ENCODE measurements at regions of chr4 and their contacts with region 1.

Region 1: DNA sequence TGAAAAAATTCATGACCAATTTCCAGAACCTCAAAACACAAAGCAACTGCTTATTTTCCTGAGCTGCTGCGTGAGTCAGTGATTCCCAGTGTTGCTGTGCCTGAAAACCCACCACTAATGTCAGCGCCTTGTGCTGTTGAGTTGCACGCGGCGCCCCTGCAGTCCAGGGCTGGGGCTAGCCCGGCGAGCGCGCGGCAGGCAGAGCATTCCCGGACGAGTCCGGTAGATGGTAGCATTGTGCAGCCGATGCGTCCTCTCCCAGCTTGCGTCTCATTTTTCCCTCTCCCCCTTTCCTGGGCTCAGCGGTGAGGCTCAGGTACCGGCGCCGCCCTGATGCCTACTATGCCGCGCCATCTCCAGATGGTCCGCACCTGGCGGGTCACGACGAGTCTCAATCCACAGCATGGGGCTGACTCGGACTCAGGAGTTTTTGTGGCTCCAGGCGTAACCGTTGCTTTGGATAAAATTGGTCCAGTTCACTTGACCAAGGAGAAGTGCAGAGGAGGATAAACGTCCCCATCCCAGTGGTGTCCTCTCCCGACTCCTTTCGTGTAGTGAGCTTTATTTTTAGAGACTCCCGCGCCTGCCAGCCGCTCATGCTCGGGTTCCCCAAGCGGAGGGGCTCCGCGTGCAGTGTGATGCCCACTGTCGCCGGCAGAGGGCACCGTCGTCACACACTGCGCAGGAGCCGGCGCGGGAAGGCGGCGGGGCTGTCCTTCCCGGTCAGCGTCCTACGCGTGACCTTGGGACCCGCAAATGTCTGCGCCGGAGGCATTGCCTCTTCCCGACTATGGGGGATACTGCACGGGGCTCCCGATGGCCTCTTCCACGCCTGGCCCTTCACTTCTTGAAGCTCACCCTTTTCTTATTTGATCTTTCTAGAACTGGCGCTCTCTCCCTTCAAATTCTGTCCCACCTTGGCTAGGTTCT is 53.6 kb upstream of the IGFBP7 start:
- DNase-seq: peak; percentile 80
- ATAC-seq: peak; percentile 98
- H3K4me3 Mint-ChIP-seq: peak overlapping the region; percentile 83
- H3K27ac Mint-ChIP-seq: no peak overlapping the region
- H3K4me1 Mint-ChIP-seq: peaks cover 13% of the 10 kb centered on the region
- H3K27me3 Mint-ChIP-seq: peaks cover 27% of the 10 kb centered on the region

Region 2: GRCh38 chr4:57131849-57132742 is 31.7 kb before region 1 on chr4:
- CTCF ChIA-PET with region 1: interaction called, 12 read pairs
- POLR2A ChIA-PET with region 1: no interaction called
- DNase-seq: no peak
- ATAC-seq: no peak
- H3K4me3 Mint-ChIP-seq: no peak overlapping the region
- H3K27ac Mint-ChIP-seq: no peak overlapping the region
- H3K4me1 Mint-ChIP-seq: no peaks in the 10 kb centered on the region
- H3K27me3 Mint-ChIP-seq: peaks cover 7% of the 10 kb centered on the region

Region 3: DNA sequence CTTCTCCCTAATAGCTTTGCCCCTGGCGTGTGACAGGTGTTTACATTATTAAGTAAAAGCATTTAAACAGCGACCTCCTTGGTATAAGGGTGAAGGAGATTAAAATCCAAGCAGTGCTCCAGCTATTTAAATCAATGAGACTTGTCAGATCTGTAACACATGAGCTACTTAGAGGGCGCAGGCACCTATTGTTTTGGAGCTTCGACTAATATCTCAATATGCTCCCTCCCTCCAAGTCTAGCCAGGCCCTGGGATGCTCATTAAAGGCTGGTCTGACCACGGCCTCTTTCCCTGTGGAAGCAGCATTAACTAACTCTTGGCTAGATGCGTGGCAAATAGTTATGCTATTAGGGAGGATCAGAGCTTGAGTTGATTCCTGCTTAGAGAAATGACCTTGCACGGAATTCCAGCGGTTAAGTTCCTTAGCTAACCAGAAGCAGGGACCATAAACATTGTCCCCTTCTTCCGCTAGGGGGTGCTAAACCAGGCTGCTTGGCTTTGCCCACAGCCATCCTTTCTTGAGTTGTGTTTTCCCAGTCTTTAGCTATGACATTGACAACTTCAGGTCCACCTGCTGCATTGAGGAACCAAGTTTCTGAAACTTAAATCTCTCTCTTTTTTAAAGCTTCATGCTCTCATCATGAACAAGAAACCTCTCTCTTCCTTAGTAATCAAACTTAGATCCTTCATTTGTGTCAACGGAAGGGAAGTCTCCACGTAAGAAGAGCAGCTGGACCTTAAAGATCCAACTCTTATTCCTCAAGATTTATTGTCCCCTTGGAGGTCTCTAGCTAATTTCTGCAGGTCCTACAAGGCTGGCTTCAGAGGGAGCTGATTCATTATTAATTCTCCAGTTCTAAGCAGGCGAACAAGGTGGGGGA is 27.0 kb after region 1 on chr4:
- CTCF ChIA-PET with region 1: interaction called, 33 read pairs
- POLR2A ChIA-PET with region 1: no interaction called
- DNase-seq: peak; percentile 28
- ATAC-seq: no peak
- H3K4me3 Mint-ChIP-seq: no peak overlapping the region
- H3K27ac Mint-ChIP-seq: no peak overlapping the region
- H3K4me1 Mint-ChIP-seq: no peaks in the 10 kb centered on the region
- H3K27me3 Mint-ChIP-seq: peaks cover 18% of the 10 kb centered on the region